Panc1 (cell line): ENCODE measurements at regions of chr11 and their contacts with region 1.

Region 1: GRCh38 chr11:32615422-32615821 is 31.8 kb downstream of the EIF3M start:
- DNase-seq: no peak
- ATAC-seq: no peak
- H3K4me3 ChIP-seq: no peak overlapping the region
- H3K27ac ChIP-seq: no peak overlapping the region
- H3K4me1 ChIP-seq: no peaks in the 10 kb centered on the region
- H3K27me3 ChIP-seq: no peaks in the 10 kb centered on the region
- CTCF ChIP-seq: peak; percentile 38; the same call in 1 of the 2 replicates

Region 2: GRCh38 chr11:32630844-32631243 is 15.4 kb after region 1 on chr11:
- CTCF ChIA-PET with region 1: no interaction called
- POLR2A ChIA-PET with region 1: no interaction called
- in situ Hi-C with region 1: no loop called
- intact Hi-C with region 1: no loop called
- DNase-seq: no peak
- ATAC-seq: no peak
- H3K4me3 ChIP-seq: no peak overlapping the region
- H3K27ac ChIP-seq: no peak overlapping the region
- H3K4me1 ChIP-seq: no peaks in the 10 kb centered on the region
- H3K27me3 ChIP-seq: peaks cover 16% of the 10 kb centered on the region
- CTCF ChIP-seq: no peak

Region 3: DNA sequence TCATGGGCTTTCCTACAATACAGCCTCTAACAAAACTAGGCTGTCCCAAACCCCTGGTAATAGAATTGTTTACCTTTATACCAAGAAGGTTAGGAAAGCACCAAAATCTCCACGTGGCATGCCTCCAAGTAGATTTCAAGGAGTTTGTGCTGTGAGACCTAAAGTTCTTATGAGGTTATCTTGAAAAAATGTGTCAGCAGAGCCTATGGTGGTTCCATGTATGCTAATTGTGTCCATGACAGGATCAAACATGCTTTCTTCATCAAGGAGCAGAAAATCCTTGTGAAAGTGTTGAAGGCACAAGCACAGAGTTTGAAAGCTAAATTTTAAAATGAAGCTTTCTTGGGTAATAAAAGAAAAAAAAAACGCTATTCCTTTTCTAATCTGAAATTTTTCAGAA is 142.9 kb after region 1 on chr11:
- CTCF ChIA-PET with region 1: interaction called, 11 read pairs
- POLR2A ChIA-PET with region 1: no interaction called
- in situ Hi-C with region 1: no loop called
- intact Hi-C with region 1: no loop called
- DNase-seq: no peak
- ATAC-seq: no peak
- H3K4me3 ChIP-seq: no peak overlapping the region
- H3K27ac ChIP-seq: no peak overlapping the region
- H3K4me1 ChIP-seq: no peaks in the 10 kb centered on the region
- H3K27me3 ChIP-seq: no peaks in the 10 kb centered on the region; the same call in 1 of the 2 replicates
- CTCF ChIP-seq: no peak